Naive thymus-derived CD4-positive, alpha-beta T cell (primary cell): ENCODE measurements at regions of chr1 and their contacts with region 1.

Region 1: DNA sequence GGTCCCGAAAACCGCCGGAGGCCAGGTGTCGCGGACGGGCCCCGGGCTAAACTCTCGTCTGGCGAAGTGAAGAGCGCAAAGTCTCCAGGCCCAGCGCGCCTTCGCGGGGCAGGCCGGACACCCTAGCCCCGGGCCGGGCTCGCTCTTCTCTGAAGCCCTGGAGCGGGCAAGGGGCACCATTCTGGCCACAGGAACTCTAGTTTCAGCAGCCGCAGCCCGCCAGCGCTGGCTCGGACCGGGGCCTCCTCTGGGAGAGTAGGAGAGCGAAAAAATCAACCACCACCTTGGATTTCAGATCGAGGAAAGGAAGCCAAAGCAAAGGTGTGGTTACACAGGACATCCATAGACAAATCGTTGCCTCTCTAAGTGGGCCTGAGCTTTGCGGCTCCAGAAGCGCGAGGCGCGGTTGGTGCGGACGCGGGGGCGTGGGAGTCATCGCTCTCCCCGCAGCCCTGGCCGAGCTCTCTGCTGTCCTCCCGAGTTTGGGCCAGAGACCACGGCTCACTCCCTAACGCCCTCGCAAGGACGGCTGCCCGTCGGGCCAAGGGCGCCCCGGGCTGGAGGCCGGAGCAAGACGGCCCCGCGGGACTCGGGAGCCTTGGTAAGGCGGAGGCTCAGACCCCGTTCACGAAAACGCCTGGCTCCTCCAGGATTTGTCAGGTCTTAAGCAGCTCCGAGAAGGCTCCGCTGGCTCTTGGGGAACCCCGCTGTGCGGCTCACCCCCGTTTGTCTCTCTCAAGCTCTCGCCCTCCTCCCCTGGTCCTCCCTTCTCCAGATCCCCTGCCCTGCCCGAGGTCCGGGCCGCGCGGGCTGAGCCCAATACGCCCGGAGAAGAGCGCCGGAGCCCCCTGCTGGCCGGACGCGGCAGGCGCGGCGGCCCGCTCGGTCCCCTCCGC is 132.9 kb upstream of the DPYD start:
- DNase-seq: peak; percentile 12 to 74 (median 55)
- ATAC-seq: peak; percentile 91
- H3K4me3 ChIP-seq: peak overlapping the region; percentile 55
- H3K4me3 Mint-ChIP-seq: peak overlapping the region; percentile 61 to 81 (median 72)
- H3K27ac ChIP-seq: no peak overlapping the region
- H3K27ac Mint-ChIP-seq: no peak overlapping the region
- H3K4me1 ChIP-seq: peaks cover 6 to 20% of the 10 kb centered on the region in 2 donors
- H3K4me1 Mint-ChIP-seq: peaks cover 17 to 29% (median 23%) of the 10 kb centered on the region in 7 donors
- H3K27me3 ChIP-seq: peaks cover 18 to 23% of the 10 kb centered on the region in 2 donors
- H3K27me3 Mint-ChIP-seq: peaks cover 78 to 90% (median 80%) of the 10 kb centered on the region in 5 donors

Region 2: GRCh38 chr1:96966536-96967138 is 1087.1 kb before region 1 on chr1:
- CTCF ChIA-PET with region 1: interaction called, 6 read pairs
- POLR2A ChIA-PET with region 1: no interaction called
- intact Hi-C with region 1: loop called (anchors 1 kb)
- DNase-seq: peak; percentile 30 to 71 (median 60)
- ATAC-seq: peak; percentile 82
- H3K4me3 ChIP-seq: no peak overlapping the region
- H3K4me3 Mint-ChIP-seq: no peak overlapping the region
- H3K27ac ChIP-seq: no peak overlapping the region
- H3K27ac Mint-ChIP-seq: no peak overlapping the region
- H3K4me1 ChIP-seq: no peaks in the 10 kb centered on the region
- H3K4me1 Mint-ChIP-seq: no peaks in the 10 kb centered on the region
- H3K27me3 ChIP-seq: no peaks in the 10 kb centered on the region
- H3K27me3 Mint-ChIP-seq: peaks cover 7 to 55% (median 28%) of the 10 kb centered on the region in 5 donors

Region 3: GRCh38 chr1:97243973-97244560 is 809.7 kb before region 1 on chr1:
- CTCF ChIA-PET with region 1: no interaction called
- POLR2A ChIA-PET with region 1: no interaction called
- intact Hi-C with region 1: loop called (anchors 2 kb)
- DNase-seq: no peak
- ATAC-seq: no peak
- H3K4me3 ChIP-seq: no peak overlapping the region
- H3K4me3 Mint-ChIP-seq: no peak overlapping the region
- H3K27ac ChIP-seq: no peak overlapping the region
- H3K27ac Mint-ChIP-seq: peak overlapping the region in 1 of 9 donors; percentile 25
- H3K4me1 ChIP-seq: no peaks in the 10 kb centered on the region
- H3K4me1 Mint-ChIP-seq: no peaks in the 10 kb centered on the region
- H3K27me3 ChIP-seq: no peaks in the 10 kb centered on the region
- H3K27me3 Mint-ChIP-seq: no peaks in the 10 kb centered on the region

Region 4: DNA sequence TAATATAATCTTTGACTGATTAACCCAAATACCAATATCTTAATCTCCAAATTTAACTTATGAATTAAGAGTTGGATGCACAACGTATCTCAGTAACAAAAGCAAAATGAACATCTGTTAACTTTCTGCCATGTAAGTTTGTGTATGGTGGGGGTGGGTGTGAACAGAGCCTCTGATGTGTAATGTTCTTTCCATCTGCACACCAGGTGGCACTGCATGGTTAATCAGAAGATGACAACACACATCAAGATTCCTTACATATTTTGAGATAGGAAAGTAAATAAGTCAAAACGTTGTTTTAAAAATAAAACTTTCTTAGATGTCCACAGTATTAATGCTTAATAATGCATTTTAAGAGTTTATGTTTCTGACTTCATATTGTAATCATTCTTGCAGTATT is 384.8 kb before region 1 on chr1:
- CTCF ChIA-PET with region 1: no interaction called
- POLR2A ChIA-PET with region 1: no interaction called
- intact Hi-C with region 1: loop called (anchors 1 kb)
- DNase-seq: peak in 1 of 9 donors; percentile 7
- ATAC-seq: no peak
- H3K4me3 ChIP-seq: no peak overlapping the region
- H3K4me3 Mint-ChIP-seq: no peak overlapping the region
- H3K27ac ChIP-seq: no peak overlapping the region
- H3K27ac Mint-ChIP-seq: no peak overlapping the region
- H3K4me1 ChIP-seq: no peaks in the 10 kb centered on the region
- H3K4me1 Mint-ChIP-seq: peaks cover 0 to 4% (median 0%) of the 10 kb centered on the region in 7 donors
- H3K27me3 ChIP-seq: no peaks in the 10 kb centered on the region
- H3K27me3 Mint-ChIP-seq: no peaks in the 10 kb centered on the region

Region 5: GRCh38 chr1:98468111-98468717 is 414.5 kb after region 1 on chr1:
- CTCF ChIA-PET with region 1: no interaction called
- POLR2A ChIA-PET with region 1: no interaction called
- intact Hi-C with region 1: loop called in 1 of 2 experiments (anchors 5 kb)
- DNase-seq: no peak
- ATAC-seq: no peak
- H3K4me3 ChIP-seq: no peak overlapping the region
- H3K4me3 Mint-ChIP-seq: no peak overlapping the region
- H3K27ac ChIP-seq: no peak overlapping the region
- H3K27ac Mint-ChIP-seq: no peak overlapping the region
- H3K4me1 ChIP-seq: no peaks in the 10 kb centered on the region
- H3K4me1 Mint-ChIP-seq: peaks cover 0 to 2% (median 0%) of the 10 kb centered on the region in 7 donors
- H3K27me3 ChIP-seq: no peaks in the 10 kb centered on the region
- H3K27me3 Mint-ChIP-seq: peaks cover 0 to 6% (median 0%) of the 10 kb centered on the region in 5 donors